Prostate gland (tissue), 2 donors: ENCODE measurements at regions of chr17 and their contacts with region 1.

Region 1: GRCh38 chr17:4948931-4949320 is 596 bp upstream of the PFN1 start:
- DNase-seq: peak; percentile 73
- H3K4me3 ChIP-seq: peak overlapping the region; percentile 94 to 100
- H3K27ac ChIP-seq: peak overlapping the region; percentile 88 to 96
- H3K4me1 ChIP-seq: peaks cover 15% of the 10 kb centered on the region
- H3K27me3 ChIP-seq: no peaks in the 10 kb centered on the region
- CTCF ChIP-seq: peak in 1 of 4 experiments; percentile 8
- POLR2A ChIP-seq: peak; percentile 49

Region 2: DNA sequence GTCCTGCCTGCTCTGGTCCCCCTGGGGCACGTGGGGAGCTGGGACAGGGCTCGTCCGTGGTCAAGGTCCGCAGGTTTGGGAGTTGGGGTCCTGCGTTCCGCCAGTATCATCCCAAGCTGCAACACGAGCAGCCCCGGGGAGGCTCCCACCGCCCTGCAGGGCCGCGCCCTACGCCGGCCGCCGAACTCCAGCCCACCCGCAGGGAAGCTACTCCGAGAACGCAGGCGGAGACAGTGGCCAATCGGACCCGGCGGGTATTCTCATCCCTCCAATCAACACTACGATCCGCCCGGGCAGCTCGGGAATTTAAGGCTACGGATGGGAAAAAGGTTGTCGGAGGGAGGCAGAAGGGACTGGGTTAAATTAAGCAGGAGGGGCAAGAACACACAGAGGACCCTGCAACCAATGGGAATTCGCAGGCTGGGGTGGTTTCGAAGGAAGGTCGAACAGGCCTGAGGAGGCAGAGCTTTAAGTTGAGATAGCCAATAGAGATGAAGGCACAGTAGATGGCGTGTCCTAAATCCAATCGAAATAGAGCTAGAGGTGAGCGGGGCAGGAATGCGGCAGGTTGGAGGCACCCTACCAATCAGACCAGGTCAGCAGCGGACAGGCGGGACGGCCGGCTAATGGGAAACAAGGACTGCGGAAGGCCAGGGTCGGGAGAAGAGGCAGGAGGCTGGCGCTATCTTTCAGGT is 18.1 kb after region 1 on chr17:
- intact Hi-C with region 1: loop called (anchors 2 kb)
- DNase-seq: peak; percentile 100
- H3K4me3 ChIP-seq: peak overlapping the region; percentile 48 to 63
- H3K27ac ChIP-seq: peak overlapping the region; percentile 94 to 96
- H3K4me1 ChIP-seq: peaks cover 12% of the 10 kb centered on the region
- H3K27me3 ChIP-seq: no peaks in the 10 kb centered on the region
- CTCF ChIP-seq: peak in 1 of 4 experiments; percentile 14
- POLR2A ChIP-seq: peak; percentile 42

Region 3: DNA sequence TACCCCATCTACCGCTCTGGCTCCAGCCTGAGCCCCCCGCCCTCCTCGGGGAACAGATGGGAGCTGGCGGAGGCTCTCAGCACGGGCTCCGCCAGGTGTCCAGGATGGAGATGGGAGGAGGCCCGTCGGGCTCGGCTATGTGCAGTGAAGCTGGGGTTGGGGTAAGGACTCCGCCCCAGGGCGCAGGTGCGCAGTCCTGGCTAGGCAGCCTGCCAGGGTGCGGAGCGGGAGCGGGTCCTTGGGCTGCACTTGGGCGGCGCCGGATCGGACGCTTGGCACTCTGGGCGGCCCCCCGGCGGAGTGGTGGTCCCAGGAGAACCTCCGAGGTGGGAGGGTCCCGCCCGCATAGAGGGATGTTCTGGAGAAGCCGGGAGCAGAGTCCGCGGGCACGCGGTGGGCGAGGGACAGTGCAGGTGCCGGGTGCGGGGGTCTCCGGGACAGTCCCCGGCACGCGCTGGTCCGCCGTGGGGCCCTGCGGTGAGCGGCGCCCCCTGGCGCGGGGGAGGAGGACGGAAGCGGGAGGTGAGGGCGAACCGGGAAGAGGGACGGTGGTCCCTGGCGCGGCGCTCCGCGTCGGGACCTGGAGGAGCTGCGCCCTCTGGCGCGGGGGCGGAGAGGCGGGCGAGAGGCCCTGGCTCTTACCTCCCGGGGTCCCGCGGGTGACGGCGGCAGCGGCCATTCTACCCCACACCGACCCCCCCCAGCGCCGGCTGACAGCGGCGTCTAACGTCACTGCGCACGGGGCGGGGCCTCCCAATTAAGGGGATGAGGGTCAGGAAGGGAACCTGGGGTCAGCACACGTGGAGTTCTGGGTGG is 38.2 kb after region 1 on chr17 and contains the start of gene CAMTA2:
- intact Hi-C with region 1: loop called (anchors 5 kb)
- DNase-seq: peak; percentile 84
- H3K4me3 ChIP-seq: peak within 1 kb of the TSS; percentile 56 to 95
- H3K27ac ChIP-seq: peak within 1 kb of the TSS; percentile 88 to 96
- H3K4me1 ChIP-seq: peaks cover 18% of the 10 kb centered on the region
- H3K27me3 ChIP-seq: no peaks in the 10 kb centered on the region
- CTCF ChIP-seq: peak; percentile 64 to 92 (median 76)
- POLR2A ChIP-seq: peak; percentile 70
- total RNA-seq, gene CAMTA2: 13.6 to 40.2 TPM

Region 4: DNA sequence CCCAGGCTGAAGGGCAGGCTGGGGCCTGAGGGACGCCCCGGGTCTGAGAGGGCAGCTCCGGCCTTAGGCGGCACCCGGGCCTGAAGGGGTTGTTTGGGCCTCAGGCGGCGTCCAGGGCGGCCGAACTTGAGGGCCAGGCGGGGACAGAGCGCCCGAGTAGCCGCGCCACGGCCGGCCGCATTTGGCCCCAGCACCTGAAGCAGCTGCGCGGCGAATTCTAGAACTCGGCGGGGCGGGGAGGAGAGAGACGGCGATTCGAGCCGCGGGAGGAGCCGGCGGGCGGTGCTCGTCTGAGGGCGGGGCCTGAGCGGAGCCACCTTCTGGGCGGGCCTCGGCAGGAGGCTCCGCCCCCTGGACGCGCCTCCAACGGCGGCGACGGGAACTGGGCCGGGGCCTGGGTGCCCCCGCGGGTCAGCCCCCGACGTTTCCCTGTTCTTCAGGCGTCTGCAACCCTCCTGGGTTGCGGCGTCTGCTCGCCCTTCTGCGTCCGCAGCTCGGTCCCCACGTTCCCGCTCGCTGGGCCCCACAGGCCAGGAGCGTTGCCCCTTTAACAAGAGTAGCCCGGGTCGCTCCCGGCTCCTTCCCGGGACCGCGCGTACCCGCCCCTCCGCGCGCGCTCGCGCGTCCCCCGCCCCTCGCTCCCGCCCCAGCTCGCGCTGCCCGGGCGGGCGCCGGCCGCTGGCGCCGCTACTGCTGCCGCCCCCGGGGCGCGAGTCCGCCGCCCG is 48.5 kb after region 1 on chr17 and contains the starts of genes INCA1 and KIF1C:
- intact Hi-C with region 1: loop called (anchors 1 kb)
- DNase-seq: peak; percentile 93
- H3K4me3 ChIP-seq: peak within 1 kb of the TSS; percentile 92 to 98
- H3K27ac ChIP-seq: peak within 1 kb of the TSS; percentile 93 to 94
- H3K4me1 ChIP-seq: peaks cover 8% of the 10 kb centered on the region
- H3K27me3 ChIP-seq: no peaks in the 10 kb centered on the region
- CTCF ChIP-seq: peak in 2 of 4 experiments; percentile 51 to 70
- POLR2A ChIP-seq: peak; percentile 89
- total RNA-seq, gene INCA1: 2.5 to 8.4 TPM
- total RNA-seq, gene KIF1C: 59.5 to 88.9 TPM

Region 5: GRCh38 chr17:5381542-5381941 is 432.6 kb after region 1 on chr17:
- intact Hi-C with region 1: no loop called
- DNase-seq: no peak
- H3K4me3 ChIP-seq: no peak overlapping the region
- H3K27ac ChIP-seq: no peak overlapping the region
- H3K4me1 ChIP-seq: no peaks in the 10 kb centered on the region
- H3K27me3 ChIP-seq: no peaks in the 10 kb centered on the region
- CTCF ChIP-seq: no peak
- POLR2A ChIP-seq: no peak